Breast epithelium (tissue), 4 donors: ENCODE measurements at regions of chr7 and their contacts with region 1.

Region 1: GRCh38 chr7:16982640-16983350 is 101.0 kb upstream of the AGR3 start:
- DNase-seq: no peak
- H3K4me3 ChIP-seq: peak overlapping the region in 1 of 3 donors; percentile 16
- H3K27ac ChIP-seq: peak overlapping the region; percentile 49 to 57
- H3K4me1 ChIP-seq: peaks cover 0 to 3% of the 10 kb centered on the region in 2 donors
- H3K27me3 ChIP-seq: no peaks in the 10 kb centered on the region
- CTCF ChIP-seq: peak; percentile 82 to 96 (median 96)
- POLR2A ChIP-seq: no peak

Region 2: DNA sequence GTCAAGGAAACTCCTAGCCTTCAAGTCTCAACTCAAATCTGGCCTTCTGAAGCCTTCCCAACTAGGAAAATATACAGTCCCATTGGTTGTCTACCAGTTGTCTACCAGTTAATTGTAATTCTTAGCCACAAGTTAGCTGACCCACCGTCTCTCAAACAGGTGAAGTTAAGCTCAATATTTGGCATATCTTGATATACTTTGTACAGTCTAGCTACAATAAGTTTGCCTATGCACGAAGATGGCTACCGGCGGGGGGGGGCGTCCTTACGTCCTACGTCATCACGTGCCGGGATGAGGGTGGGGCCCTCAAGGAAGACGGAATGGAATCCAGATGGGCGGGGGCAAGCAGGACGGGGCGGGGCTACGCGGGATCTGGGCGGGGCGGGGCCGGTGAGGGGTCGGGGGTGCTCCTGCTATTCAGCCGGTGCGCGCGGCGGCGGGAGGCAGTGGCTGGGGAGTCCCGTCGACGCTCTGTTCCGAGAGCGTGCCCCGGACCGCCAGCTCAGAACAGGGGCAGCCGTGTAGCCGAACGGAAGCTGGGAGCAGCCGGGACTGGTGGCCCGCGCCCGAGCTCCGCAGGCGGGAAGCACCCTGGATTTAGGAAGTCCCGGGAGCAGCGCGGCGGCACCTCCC is 315.5 kb after region 1 on chr7 and contains the start of gene AHR:
- intact Hi-C with region 1: loop called (anchors 10 kb)
- DNase-seq: peak; percentile 94 to 95
- H3K4me3 ChIP-seq: peak within 1 kb of the TSS; percentile 91 to 100 (median 93)
- H3K27ac ChIP-seq: peak within 1 kb of the TSS; percentile 95 to 98
- H3K4me1 ChIP-seq: no peaks in the 10 kb centered on the region
- H3K27me3 ChIP-seq: no peaks in the 10 kb centered on the region
- CTCF ChIP-seq: no peak
- POLR2A ChIP-seq: peak; percentile 89
- total RNA-seq, gene AHR: 103 to 349 (median 146) TPM